ENCODE measurements at regions of chr7 and their contacts with region 1.

Region 1: GRCh38 chr7:75711656-75712514 is 26.9 kb downstream of the HIP1 start:
- DNase-seq: no peak

Region 2: DNA sequence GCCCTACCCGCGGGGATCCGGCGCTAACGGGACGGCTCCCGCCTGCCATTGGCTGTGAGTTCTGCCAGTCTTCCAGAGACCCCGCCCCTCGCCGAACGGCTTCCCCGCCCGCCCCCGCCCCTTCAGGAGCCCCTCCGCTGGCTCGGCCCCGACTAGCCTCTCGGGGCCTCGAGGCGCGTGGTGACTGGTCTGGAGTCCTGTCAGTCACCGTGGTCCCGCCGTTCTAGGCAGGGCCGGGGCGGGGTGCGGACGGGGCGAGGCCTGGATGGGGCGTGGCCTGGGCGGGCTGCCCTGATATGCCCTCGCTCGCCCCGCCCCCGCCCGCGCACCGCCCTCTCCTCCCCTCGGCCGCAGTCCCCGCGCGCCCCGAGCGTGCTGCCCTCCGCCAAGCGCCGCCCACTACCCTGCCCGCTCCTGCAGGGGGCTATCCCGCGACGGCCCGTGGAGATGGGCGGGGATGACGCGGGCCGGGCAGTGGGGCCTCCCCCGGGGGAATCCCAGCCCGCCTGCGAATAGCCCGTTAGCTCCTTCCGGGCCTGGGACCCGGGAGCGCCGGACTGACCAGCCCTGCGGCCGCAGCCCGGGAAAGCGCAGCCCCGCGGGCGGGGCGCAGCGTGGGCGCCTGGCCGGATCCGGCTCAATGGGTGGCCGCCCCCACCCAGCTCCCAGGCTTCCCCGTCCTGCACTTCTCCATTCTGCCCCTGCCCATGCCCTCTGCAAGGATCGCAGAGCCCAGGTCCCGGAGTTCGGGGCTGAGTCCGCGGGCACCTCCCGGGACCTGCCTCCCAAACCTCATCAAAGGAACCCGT is 27.3 kb after region 1 on chr7:
- intact Hi-C with region 1: loop called (anchors 2 kb)
- DNase-seq: peak; percentile 100